ENCODE measurements at regions of chr1 and their contacts with region 1.

Region 1: GRCh38 chr1:170707959-170708655 is 44.2 kb downstream of the PRRX1 start:
- DNase-seq: peak; percentile 93
- H3K4me3 ChIP-seq: no peak overlapping the region
- H3K27ac ChIP-seq: peak overlapping the region; percentile 80
- H3K4me1 ChIP-seq: peaks cover 22% of the 10 kb centered on the region
- H3K27me3 ChIP-seq: no peaks in the 10 kb centered on the region
- CTCF ChIP-seq: no peak

Region 2: DNA sequence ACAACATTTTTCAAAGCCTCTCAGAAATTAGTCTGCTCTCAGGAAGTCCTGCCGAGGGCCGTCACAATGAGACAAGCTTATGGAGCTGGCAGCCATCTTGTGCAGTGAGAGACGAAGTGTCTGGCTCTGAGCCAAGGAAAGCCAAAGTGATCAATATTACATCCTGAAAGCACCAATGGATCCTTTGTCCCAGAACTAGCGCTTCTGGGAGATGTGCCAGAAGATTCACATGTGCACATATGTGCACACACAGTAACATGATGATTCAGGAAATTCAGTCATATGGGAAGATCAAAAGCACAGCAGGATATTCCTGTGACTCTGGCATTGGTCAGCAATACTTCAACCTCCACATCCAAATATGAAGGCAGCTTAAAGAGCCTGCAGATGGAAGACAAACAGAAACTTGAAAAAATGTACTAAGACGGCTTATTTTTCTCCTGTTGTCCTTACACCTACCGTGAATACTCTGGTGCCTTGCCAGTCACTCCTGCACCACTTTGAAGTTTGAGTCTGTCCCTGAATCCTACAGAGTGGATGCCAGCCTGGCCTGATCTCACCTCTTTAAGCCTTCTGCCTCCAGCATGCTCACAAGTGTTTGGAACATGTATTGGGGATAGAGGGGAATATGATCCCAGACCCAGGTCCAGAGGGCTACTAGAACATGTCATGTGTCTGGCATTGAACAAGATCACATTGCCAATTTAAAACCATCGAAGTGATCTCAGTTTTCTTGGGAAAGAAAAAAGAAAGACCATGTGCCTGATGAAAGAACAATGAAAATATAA is 88.7 kb before region 1 on chr1:
- CTCF ChIA-PET with region 1: no interaction called
- dilution Hi-C with region 1: no loop called
- in situ Hi-C with region 1: no loop called
- intact Hi-C with region 1: loop called (anchors 10 kb)
- DNase-seq: peak; percentile 46
- H3K4me3 ChIP-seq: no peak overlapping the region
- H3K27ac ChIP-seq: no peak overlapping the region
- H3K4me1 ChIP-seq: peaks cover 20% of the 10 kb centered on the region
- H3K27me3 ChIP-seq: no peaks in the 10 kb centered on the region
- CTCF ChIP-seq: no peak